PC-3 (cell line): ENCODE measurements at regions of chr11 and their contacts with region 1.

Region 1: DNA sequence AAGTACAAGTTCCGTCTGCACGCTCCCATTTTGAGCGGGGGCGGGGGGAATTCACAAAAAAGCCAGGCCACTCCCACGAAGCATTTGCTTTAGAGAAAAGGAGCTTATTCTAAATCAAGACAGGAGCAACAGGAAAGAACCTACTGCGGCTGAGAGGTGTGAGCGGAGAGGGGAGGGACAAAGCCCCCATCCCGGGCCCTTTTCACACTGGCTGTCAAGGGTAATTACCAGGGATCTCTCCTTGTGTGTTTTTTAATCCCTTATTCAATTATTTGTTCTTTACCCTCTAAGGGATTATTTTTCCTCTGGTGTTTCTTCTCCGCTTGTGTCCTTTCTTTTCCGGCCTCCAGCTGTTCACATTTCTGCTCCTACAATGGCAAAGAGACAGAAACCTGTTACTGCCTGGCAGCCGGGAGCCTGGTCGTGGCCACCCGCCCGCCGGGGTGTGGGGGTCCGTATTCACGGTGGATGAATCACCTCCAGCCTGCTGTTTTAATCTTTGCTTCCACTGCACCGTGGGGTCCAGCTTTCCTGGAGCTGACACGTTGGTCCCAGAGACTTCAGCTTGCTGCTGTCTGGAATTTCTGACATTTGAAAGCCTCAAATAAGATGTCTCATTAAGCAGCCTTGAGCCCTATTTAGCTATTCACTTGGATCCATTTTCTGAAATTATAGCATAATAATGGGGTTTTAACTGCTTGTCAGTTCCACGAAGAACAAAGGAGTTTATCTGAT is 61.4 kb upstream of the FADD start:
- DNase-seq: no peak
- ATAC-seq: peak; percentile 9; the same call in 1 of the 2 replicates
- H3K4me3 ChIP-seq: no peak overlapping the region; the same call in 1 of the 2 replicates
- H3K27ac ChIP-seq: peak overlapping the region; percentile 62
- H3K4me1 ChIP-seq: peaks cover 33% of the 10 kb centered on the region
- H3K27me3 ChIP-seq: no peaks in the 10 kb centered on the region
- CTCF ChIP-seq: no peak

Region 2: GRCh38 chr11:70099578-70100279 is 41.9 kb before region 1 on chr11:
- CTCF ChIA-PET with region 1: no interaction called
- POLR2A ChIA-PET with region 1: no interaction called
- intact Hi-C with region 1: no loop called
- DNase-seq: no peak
- ATAC-seq: no peak
- H3K4me3 ChIP-seq: no peak overlapping the region
- H3K27ac ChIP-seq: no peak overlapping the region
- H3K4me1 ChIP-seq: peaks cover 5% of the 10 kb centered on the region
- H3K27me3 ChIP-seq: no peaks in the 10 kb centered on the region
- CTCF ChIP-seq: no peak

Region 3: DNA sequence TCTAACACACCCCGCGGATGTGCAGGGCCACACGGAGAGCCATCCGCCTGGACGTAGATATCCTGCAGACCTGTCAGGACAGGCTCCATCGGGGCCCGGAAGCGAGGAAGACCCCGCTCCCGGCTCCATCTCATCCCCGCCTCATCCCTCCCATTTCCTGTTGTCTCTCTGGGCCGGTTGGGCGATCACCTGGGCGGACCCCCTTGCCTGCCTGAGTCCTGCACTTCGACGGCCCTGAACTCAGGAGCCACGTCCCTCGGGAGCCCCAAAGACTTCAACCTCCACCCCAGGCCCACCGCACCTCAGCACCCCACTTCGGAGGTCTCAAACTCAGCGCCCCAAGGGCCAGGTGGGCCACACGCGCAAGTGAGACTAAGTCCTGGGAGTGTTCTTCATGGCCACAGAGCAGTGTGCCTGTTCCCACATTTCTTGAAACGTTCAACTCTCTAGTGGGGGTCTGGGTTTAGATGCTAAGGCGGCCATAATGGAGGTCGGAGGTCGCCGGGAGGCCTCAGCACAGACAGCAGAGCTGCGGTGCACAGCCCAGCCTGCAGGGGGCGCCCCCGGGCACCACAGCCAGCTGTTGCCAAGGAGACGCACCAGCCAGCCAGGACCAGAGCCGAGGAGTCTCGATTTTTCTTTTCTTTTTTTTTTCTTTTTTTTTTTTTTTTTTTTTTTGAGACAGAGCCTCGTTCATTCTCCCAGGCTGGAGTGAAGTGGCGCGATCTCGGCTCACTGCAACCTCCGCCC is 35.5 kb after region 1 on chr11:
- CTCF ChIA-PET with region 1: interaction called, 19 read pairs
- POLR2A ChIA-PET with region 1: no interaction called
- intact Hi-C with region 1: no loop called
- DNase-seq: peak; percentile 62
- ATAC-seq: peak; percentile 51
- H3K4me3 ChIP-seq: no peak overlapping the region
- H3K27ac ChIP-seq: no peak overlapping the region
- H3K4me1 ChIP-seq: no peaks in the 10 kb centered on the region
- H3K27me3 ChIP-seq: no peaks in the 10 kb centered on the region
- CTCF ChIP-seq: peak; percentile 79